Keratinocyte (primary cell): ENCODE measurements at regions of chr14 and their contacts with region 1.

Region 1: DNA sequence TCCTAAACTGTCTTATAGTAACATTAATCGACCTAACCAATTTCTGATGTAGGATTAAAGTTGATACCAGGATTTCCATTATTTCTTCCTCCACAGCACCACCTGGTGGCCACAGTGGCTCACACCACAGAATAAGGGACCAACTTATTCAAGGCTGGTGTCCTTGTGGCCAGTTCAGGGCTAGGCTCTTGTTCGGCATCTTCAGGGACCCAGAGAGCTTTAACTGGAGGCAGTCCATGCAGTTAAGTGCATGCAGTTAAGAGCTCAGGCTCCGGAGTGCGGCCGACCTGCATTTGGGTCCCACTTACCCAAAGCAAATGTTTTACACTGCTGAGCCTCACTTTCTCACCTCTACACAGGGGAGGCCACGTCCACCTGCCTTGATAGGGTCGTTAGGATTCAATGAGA is 42.0 kb upstream of the GPR68 start:
- DNase-seq: peak; percentile 52
- H3K4me3 ChIP-seq: no peak overlapping the region
- H3K27ac ChIP-seq: no peak overlapping the region
- H3K4me1 ChIP-seq: peaks cover 23% of the 10 kb centered on the region
- H3K27me3 ChIP-seq: no peaks in the 10 kb centered on the region
- CTCF ChIP-seq: peak; percentile 68 to 88 (median 87)

Region 2: DNA sequence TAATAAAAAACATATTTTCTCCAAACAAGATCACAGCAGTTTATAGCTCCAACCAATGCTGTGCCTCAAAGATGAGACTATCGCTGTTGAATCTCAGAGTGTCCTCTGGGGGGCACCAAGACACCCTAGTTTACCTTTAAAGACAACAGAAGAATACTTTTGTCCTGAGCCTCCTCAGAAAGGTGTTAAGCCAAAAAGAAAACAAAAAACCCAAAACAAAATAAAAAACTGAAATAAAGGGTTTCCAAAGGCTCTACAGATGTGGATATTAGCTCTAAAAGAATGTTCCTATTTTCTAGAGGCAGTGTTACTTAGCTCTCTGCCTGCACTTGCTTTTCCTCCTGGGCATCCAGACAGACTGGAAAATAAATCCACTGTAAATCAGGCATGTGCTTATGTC is 383.4 kb before region 1 on chr14:
- dilution Hi-C with region 1: loop called (anchors 25 kb)
- DNase-seq: no peak
- H3K4me3 ChIP-seq: no peak overlapping the region
- H3K27ac ChIP-seq: no peak overlapping the region
- H3K4me1 ChIP-seq: no peaks in the 10 kb centered on the region
- H3K27me3 ChIP-seq: no peaks in the 10 kb centered on the region
- CTCF ChIP-seq: peak; percentile 54 to 71 (median 57)

Region 3: DNA sequence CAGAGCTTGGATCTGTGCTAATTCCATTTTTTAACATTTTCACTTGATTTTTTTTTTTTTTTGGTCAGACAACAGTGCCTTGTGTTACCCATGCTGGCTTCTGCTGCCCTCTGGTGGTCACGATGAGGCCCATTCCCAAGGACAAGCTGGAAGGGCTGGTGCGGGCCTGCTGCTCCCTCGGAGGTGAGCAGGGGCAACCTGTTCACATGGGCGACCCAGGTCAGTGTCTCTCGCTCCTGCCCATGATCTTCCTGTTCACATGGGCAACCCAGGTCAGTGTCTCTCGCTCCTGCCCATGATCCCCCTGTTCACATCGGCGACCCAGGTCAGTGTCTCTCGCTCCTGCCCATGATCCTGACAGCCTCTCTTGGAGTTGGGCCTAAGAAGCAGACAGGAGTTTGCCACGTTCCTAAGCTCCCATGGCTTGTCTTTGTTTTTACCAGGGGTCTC is 113.3 kb before region 1 on chr14:
- dilution Hi-C with region 1: loop called (anchors 25 kb)
- DNase-seq: peak; percentile 40
- H3K4me3 ChIP-seq: no peak overlapping the region
- H3K27ac ChIP-seq: no peak overlapping the region
- H3K4me1 ChIP-seq: peaks cover 2% of the 10 kb centered on the region
- H3K27me3 ChIP-seq: no peaks in the 10 kb centered on the region
- CTCF ChIP-seq: peak; percentile 85 to 92 (median 89)